ENCODE measurements at regions of chr2 and their contacts with region 1.

Region 1: DNA sequence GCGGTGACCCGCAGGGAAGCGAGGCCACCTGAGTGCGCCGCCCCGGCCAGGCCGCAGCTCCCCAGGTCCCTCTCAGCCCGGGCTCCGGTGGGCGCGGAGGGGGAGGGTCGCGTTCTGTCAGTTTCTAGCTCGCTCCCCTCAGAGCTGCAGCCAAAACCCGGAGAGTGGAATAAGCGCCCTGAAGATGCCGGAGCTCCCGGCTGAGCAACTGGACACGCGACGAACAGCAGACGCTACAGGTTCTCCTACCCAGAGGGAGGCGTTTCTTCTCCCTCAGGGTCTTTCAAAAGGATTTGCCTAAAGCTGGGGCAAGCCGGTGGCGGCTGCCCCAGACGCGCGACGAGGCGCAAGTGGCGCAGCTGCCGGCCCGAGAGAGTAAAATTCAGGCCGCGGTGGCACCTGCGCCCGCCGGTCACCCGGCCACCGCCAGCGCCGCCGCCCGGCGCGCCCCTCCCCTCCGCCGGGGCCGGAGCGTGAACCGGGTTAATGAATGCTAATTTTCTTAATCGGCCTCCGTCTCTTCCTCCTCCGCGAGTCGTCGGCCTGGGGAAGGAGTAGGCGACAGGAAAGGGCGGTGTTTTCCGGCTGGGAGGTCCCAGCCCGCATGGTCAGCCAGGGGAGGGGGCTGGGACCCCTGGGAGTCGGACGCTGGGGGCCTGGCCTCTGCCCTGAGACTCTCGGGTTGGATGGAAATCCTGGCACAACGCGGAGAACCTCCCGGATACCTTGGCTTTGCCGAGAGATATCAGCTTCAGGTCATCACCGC is 845 bp upstream of the CDC42EP3 start:
- DNase-seq: peak; percentile 59
- H3K4me3 Mint-ChIP-seq: peak overlapping the region; percentile 83
- H3K27ac Mint-ChIP-seq: peak overlapping the region; percentile 67
- H3K4me1 Mint-ChIP-seq: peaks cover 38% of the 10 kb centered on the region
- H3K27me3 Mint-ChIP-seq: peaks cover 8% of the 10 kb centered on the region

Region 2: DNA sequence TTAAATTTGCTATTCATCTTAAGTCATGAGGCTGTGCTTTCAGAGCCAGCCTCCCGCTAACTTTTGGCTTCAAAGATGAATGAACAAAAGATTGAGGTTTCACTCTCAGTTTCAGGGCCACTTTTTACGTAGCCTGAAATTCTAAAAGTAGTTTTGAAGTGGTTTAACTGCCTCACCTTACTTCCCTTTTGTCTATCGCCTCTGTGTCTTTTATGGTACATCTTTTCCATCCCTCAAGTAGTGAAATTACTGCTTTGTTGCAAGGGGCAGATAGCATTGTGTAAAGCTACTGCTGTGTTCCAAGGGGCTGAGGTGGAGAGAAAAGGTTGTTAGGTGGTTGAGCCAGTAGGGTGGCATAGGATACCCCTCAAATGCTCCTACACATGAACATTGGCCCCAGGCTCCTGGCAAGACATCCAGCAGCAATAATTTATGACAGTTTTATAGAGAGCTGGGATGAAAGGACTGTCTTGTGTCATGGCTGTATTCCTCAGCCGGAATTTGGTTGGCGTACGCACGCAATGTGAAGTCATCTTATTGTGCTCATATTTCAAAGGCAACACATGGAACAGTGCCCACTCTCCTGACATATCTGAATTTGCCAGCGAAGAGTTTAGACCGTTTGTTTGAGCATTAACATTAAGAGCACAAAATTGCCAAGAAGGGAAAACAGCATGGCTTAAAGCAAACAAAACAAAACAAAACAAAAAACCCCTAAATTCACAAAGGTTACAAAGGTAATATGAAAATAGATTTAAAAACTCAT is 295.7 kb before region 1 on chr2:
- intact Hi-C with region 1: loop called (anchors 5 kb)
- DNase-seq: peak; percentile 29
- H3K4me3 Mint-ChIP-seq: peak overlapping the region; percentile 34
- H3K27ac Mint-ChIP-seq: peak overlapping the region; percentile 88
- H3K4me1 Mint-ChIP-seq: peaks cover 51% of the 10 kb centered on the region
- H3K27me3 Mint-ChIP-seq: peaks cover 51% of the 10 kb centered on the region

Region 3: DNA sequence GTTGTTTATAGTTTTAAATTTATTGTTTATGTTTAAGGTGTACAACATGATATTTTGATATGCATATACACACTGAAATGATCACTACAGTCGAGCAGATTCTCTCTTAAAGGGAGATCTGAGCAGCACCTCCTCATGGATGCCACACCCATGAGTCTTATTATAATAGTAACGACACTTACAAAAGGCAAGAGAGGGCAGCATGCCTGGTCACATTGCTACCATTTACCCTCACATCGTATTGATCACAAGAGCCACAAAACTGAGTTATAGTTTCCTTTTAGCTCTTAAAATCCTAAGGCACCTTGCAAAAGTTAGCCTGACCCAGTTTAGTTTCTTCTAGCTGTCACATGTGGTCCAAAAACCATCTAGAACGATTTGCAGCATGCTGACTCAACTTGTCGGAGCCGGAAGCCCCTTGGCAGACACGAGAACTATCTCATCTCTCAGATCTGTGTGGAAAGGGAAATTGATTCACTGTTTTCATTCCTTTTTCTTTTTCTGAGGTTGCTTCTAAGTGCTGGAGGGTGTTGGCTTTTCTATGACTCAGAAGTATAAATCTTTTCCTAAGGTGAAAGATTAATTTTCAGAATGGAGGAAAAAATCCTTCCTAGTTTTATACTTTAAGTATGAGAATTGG is 86.2 kb before region 1 on chr2:
- intact Hi-C with region 1: loop called (anchors 1 kb)
- DNase-seq: peak; percentile 62
- H3K4me3 Mint-ChIP-seq: peak overlapping the region; percentile 56
- H3K27ac Mint-ChIP-seq: peak overlapping the region; percentile 50
- H3K4me1 Mint-ChIP-seq: peaks cover 71% of the 10 kb centered on the region
- H3K27me3 Mint-ChIP-seq: peaks cover 2% of the 10 kb centered on the region

Region 4: DNA sequence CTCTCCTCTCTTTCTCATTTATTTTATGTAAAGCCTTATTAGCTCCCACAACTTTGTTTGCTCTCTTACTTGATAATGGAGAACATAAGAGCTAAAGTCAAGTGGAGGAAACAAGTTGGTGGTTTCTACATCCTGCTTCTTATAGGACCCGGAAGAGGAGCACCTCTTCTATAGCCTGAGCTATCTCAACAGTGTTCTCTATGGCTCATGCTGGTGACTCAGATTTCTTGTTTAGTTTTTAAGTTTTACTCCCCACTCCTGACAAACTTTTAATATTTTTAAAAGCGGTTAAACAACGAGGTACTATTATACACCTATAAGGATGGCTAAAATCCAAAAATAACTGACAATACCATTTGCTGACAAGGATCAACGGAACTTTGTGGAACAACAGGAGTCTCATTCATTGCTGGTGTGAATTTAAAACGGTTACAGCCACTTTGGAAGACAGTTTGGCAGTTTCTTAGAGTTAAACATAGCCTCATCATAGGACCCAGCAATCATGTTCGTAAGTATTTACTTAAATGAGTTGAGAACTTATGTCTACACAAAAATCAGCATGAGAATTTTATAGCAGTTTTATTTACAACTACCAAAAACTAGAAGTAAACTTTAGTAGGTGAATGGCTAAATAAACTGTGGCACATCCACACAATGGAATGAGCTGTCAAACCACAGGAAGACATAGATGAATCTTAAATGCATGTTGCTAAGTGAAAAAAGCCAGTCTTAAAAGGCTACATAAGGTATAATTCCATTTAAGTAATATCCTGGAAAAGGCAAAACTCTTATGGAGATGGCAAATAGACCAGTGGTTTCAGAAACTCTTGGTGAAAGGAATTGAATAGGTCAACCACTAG is 11.9 kb after region 1 on chr2:
- intact Hi-C with region 1: loop called (anchors 1 kb)
- DNase-seq: no peak
- H3K4me3 Mint-ChIP-seq: peak overlapping the region; percentile 34
- H3K27ac Mint-ChIP-seq: peak overlapping the region; percentile 85
- H3K4me1 Mint-ChIP-seq: peaks cover 27% of the 10 kb centered on the region
- H3K27me3 Mint-ChIP-seq: no peaks in the 10 kb centered on the region

Region 5: GRCh38 chr2:37871456-37872191 is 199.3 kb after region 1 on chr2:
- intact Hi-C with region 1: loop called (anchors 1 kb)
- DNase-seq: no peak
- H3K4me3 Mint-ChIP-seq: peak overlapping the region; percentile 83
- H3K27ac Mint-ChIP-seq: peak overlapping the region; percentile 100
- H3K4me1 Mint-ChIP-seq: peaks cover 51% of the 10 kb centered on the region
- H3K27me3 Mint-ChIP-seq: peaks cover 22% of the 10 kb centered on the region

Measured in activated T-helper 1 cell treated with anti-CD3 and anti-CD28 coated beads, Interleukin-12 subunit alpha, Interleukin-12 subunit beta, Interleukin-2, Interleukin-4 antibody, amounts not matched to agents 30 ng/mL and 10 ng/mL and 1 ng/mL, durations not matched to agents 14 hours and 24 hours and 36 hours (primary cell).